ENCODE measurements at regions of chr7 and their contacts with region 1.

Region 1: DNA sequence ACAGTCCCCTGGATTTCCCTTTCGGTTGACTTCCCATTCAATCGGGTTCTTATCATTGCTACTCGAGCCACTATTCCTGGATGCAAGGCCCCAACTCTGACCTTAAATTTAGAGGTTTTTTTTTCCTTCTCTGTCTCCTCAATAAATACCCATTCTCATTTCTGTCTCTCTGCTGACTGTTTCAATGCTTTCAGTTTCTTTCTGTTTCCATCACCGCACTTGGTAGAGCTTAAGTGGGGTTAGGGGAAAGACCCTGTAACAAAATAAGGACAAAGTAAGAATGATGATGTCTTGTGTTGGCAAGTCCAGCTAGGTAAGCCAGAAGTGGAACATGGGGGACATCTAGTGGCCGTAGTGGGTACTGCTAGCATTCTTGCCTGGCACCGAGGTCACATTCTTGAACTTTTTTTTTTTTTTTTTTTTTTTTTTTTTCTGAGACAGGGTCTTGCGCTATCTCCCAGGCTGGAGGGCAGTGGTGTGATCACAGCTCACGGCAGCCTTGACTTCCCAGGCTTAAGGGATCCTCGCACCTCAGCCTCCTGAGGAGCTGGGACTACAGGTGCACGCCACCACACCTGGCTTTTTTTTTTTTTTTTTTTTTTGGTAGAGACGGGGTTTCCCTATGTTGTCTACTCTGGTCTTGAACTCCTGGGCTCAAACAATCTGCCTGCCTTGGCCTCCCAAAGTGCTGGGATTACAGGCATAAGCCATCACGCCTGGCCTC is 40.3 kb downstream of the ZC3HC1 start:
- DNase-seq: peak; percentile 75 to 92 (median 87)
- ATAC-seq: peak; percentile 87
- H3K4me3 ChIP-seq: no peak overlapping the region
- H3K4me3 Mint-ChIP-seq: no peak overlapping the region
- H3K27ac ChIP-seq: no peak overlapping the region
- H3K27ac Mint-ChIP-seq: no peak overlapping the region
- H3K4me1 ChIP-seq: peaks cover 5% of the 10 kb centered on the region
- H3K4me1 Mint-ChIP-seq: no peaks in the 10 kb centered on the region
- H3K27me3 ChIP-seq: no peaks in the 10 kb centered on the region
- H3K27me3 Mint-ChIP-seq: no peaks in the 10 kb centered on the region
- CTCF ChIP-seq: peak; percentile 87

Region 2: DNA sequence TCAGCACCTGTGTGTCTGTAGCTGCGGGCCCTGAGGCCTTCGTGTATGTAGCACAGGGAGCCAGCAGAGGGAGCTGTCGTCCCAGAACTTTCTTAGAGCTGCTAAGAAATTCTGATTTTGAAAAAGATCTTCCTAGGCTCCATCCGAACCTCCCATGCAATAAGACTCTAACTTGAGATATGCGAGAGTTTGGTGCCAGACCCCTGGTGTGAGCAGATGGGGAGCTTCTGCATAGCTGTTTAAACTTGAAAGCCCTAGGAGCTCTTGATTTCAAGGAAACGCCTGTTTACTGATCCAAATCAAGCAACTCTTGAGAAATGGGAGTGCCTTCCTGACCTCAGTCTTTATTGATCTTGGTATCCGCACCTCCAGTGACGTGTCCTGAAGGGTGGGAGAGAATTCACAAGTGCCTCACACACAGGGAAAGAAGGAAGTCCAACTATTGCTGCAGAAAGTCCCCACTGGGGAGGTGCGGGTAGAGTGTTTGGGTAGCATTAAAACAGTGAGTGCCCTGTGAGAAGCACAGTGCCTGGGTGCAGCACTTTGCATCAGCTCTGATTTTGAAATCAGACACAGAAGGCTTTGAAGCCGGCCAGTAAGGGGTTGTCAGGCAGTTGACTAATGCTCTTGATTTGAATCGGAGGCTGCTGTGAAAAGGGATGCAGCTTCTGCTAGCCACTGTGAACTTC is 643.0 kb before region 1 on chr7:
- CTCF ChIA-PET with region 1: interaction called, 5 read pairs
- POLR2A ChIA-PET with region 1: no interaction called
- intact Hi-C with region 1: loop called (anchors 2 to 5 kb)
- DNase-seq: peak; percentile 51 to 84 (median 65)
- ATAC-seq: peak; percentile 85
- H3K4me3 ChIP-seq: peak overlapping the region; percentile 24
- H3K4me3 Mint-ChIP-seq: peak overlapping the region; percentile 9
- H3K27ac ChIP-seq: no peak overlapping the region
- H3K27ac Mint-ChIP-seq: no peak overlapping the region
- H3K4me1 ChIP-seq: peaks cover 15% of the 10 kb centered on the region
- H3K4me1 Mint-ChIP-seq: peaks cover 15% of the 10 kb centered on the region
- H3K27me3 ChIP-seq: no peaks in the 10 kb centered on the region
- H3K27me3 Mint-ChIP-seq: no peaks in the 10 kb centered on the region
- CTCF ChIP-seq: peak; percentile 78

Region 3: GRCh38 chr7:129644634-129645230 is 366.1 kb before region 1 on chr7:
- CTCF ChIA-PET with region 1: no interaction called
- POLR2A ChIA-PET with region 1: no interaction called
- intact Hi-C with region 1: loop called in 1 of 2 experiments (anchors 10 kb)
- DNase-seq: peak in 3 of 14 experiments; percentile 28 to 44 (median 39)
- ATAC-seq: no peak
- H3K4me3 ChIP-seq: no peak overlapping the region
- H3K4me3 Mint-ChIP-seq: no peak overlapping the region
- H3K27ac ChIP-seq: no peak overlapping the region
- H3K27ac Mint-ChIP-seq: no peak overlapping the region
- H3K4me1 ChIP-seq: peaks cover 3% of the 10 kb centered on the region
- H3K4me1 Mint-ChIP-seq: peaks cover 38% of the 10 kb centered on the region
- H3K27me3 ChIP-seq: no peaks in the 10 kb centered on the region
- H3K27me3 Mint-ChIP-seq: no peaks in the 10 kb centered on the region
- CTCF ChIP-seq: peak; percentile 26

Region 4: DNA sequence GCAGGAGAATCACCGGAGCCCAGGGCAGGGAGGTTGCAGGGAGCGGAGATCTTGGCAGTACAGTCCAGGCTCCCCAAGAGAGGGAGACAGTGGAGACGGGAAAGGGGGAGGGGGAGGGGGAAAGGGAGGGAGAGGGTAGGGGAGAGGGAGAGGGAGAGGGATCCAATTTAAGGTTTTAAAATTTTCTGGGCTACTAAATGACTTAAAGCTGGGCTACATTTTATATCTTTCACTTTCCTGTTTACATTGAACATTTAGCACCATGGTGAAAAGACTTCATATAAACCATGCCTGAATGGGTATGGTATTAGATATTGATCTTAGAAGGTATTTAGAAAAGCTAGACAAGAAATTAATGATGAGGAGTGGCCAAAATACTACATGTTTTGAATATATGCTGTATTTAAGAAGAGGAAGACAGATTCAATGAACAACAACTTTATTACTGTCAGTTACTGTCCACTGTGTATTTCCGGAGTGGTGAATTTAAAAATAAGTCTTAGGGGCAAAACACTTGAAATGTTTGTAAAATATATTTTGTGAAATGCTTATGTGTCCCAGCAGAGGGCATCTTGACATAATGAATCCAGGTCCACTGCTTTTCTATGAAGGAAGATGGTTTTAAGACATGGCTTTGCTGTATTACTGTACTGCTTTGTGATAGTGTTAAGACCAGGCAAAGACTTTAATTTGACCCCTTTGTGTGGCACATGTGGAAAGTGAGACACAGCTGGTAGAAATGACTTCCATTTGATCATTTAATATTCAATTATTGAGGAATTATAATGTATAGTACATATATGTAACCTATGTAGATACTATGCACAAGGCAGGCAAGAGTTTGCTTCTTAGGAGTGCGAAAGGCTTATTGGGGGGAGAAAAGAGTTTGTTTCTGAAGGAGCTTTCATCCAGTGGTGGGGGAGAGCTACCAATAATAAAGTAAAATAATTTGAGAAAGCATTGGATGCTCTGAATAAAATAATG is 346.5 kb before region 1 on chr7:
- CTCF ChIA-PET with region 1: interaction called, 5 read pairs
- POLR2A ChIA-PET with region 1: no interaction called
- intact Hi-C with region 1: loop called in 1 of 2 experiments (anchors 5 kb)
- DNase-seq: peak in 3 of 14 experiments; percentile 23 to 30 (median 27)
- ATAC-seq: no peak
- H3K4me3 ChIP-seq: no peak overlapping the region
- H3K4me3 Mint-ChIP-seq: no peak overlapping the region
- H3K27ac ChIP-seq: no peak overlapping the region
- H3K27ac Mint-ChIP-seq: no peak overlapping the region
- H3K4me1 ChIP-seq: no peaks in the 10 kb centered on the region
- H3K4me1 Mint-ChIP-seq: peaks cover 10% of the 10 kb centered on the region
- H3K27me3 ChIP-seq: no peaks in the 10 kb centered on the region
- H3K27me3 Mint-ChIP-seq: no peaks in the 10 kb centered on the region
- CTCF ChIP-seq: no peak

Region 5: GRCh38 chr7:129933627-129934026 is 77.2 kb before region 1 on chr7:
- CTCF ChIA-PET with region 1: interaction called, 5 read pairs
- POLR2A ChIA-PET with region 1: no interaction called
- intact Hi-C with region 1: loop called in 1 of 2 experiments (anchors 5 kb)
- DNase-seq: no peak
- ATAC-seq: no peak
- H3K4me3 ChIP-seq: no peak overlapping the region
- H3K4me3 Mint-ChIP-seq: no peak overlapping the region
- H3K27ac ChIP-seq: no peak overlapping the region
- H3K27ac Mint-ChIP-seq: no peak overlapping the region
- H3K4me1 ChIP-seq: no peaks in the 10 kb centered on the region
- H3K4me1 Mint-ChIP-seq: peaks cover 24% of the 10 kb centered on the region
- H3K27me3 ChIP-seq: no peaks in the 10 kb centered on the region
- H3K27me3 Mint-ChIP-seq: no peaks in the 10 kb centered on the region
- CTCF ChIP-seq: no peak

Measured in CD4-positive, alpha-beta T cell (primary cell).